Activated CD4-positive, alpha-beta memory T cell treated with anti-CD3 and anti-CD28 coated beads, Interleukin-2, amount 10 ng/mL, durations not matched to agents 7 days and 5 days (primary cell): ENCODE measurements at regions of chr9 and their contacts with region 1.

Region 1: GRCh38 chr9:97982683-97983588 is at the start of gene ANP32B:
- DNase-seq: peak; percentile 95
- H3K4me3 Mint-ChIP-seq: peak within 1 kb of the TSS; percentile 82
- H3K27ac Mint-ChIP-seq: peak within 1 kb of the TSS; percentile 88
- H3K4me1 Mint-ChIP-seq: peaks cover 46% of the 10 kb centered on the region
- H3K27me3 Mint-ChIP-seq: no peaks in the 10 kb centered on the region
- total RNA-seq, gene ANP32B: 317 to 335 TPM

Region 2: DNA sequence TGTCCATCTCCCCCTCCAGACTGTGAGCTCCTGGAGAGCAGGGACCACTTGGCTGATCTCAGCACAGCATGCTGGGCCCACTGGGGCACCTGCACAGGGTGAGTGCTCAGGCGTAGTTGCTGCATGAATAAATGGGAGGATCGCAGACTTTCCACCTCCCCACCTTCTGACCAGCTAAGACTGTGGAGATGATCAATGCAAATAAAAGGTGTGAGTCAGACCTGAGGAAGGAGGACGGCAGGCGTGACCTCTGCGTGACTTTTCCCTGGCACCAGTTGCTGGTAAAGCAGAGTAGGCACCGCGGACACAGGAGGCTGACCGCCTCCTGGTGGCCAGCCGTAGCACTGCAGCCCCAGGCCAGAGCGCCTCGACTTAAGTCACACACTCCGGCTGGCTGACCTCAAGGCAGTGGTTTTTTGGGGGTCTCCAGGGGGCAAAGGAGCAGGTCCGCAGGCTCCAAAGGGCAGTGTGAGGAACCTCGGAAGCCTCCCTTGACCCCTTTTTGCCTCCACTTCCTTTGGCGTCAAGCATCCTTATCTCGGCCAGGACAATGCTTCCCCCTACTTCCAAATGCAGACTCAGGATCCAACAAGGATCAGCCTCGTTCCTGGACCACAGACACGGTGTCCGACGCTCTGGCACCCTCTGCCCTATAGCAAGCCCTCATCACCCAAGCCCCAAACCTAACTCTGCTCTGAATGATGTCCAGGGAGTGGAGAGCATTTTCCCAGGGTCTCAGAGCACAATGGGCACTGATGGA is 583.8 kb before region 1 on chr9:
- CTCF ChIA-PET with region 1: no interaction called
- POLR2A ChIA-PET with region 1: no interaction called
- DNase-seq: peak; percentile 70
- H3K4me3 Mint-ChIP-seq: no peak overlapping the region
- H3K27ac Mint-ChIP-seq: no peak overlapping the region
- H3K4me1 Mint-ChIP-seq: peaks cover 28% of the 10 kb centered on the region
- H3K27me3 Mint-ChIP-seq: peaks cover 56% of the 10 kb centered on the region

Region 3: GRCh38 chr9:97559111-97559514 is 423.8 kb before region 1 on chr9:
- CTCF ChIA-PET with region 1: no interaction called
- POLR2A ChIA-PET with region 1: no interaction called
- DNase-seq: no peak
- H3K4me3 Mint-ChIP-seq: peak overlapping the region; percentile 1
- H3K27ac Mint-ChIP-seq: peak overlapping the region; percentile 41
- H3K4me1 Mint-ChIP-seq: peaks cover 11% of the 10 kb centered on the region
- H3K27me3 Mint-ChIP-seq: peaks cover 31% of the 10 kb centered on the region

Region 4: GRCh38 chr9:97696803-97697601 is 285.9 kb before region 1 on chr9 and contains the start of gene XPA:
- CTCF ChIA-PET with region 1: no interaction called
- POLR2A ChIA-PET with region 1: interaction called, 10 read pairs
- DNase-seq: peak; percentile 96
- H3K4me3 Mint-ChIP-seq: peak within 1 kb of the TSS; percentile 87
- H3K27ac Mint-ChIP-seq: peak within 1 kb of the TSS; percentile 66
- H3K4me1 Mint-ChIP-seq: peaks cover 43% of the 10 kb centered on the region
- H3K27me3 Mint-ChIP-seq: peaks cover 6% of the 10 kb centered on the region
- total RNA-seq, gene XPA: 12.1 to 12.4 TPM

Region 5: GRCh38 chr9:97930972-97931371 is 52.0 kb before region 1 on chr9:
- CTCF ChIA-PET with region 1: interaction called, 10 read pairs
- POLR2A ChIA-PET with region 1: interaction called, 16 read pairs
- DNase-seq: no peak
- H3K4me3 Mint-ChIP-seq: no peak overlapping the region
- H3K27ac Mint-ChIP-seq: peak overlapping the region; percentile 80
- H3K4me1 Mint-ChIP-seq: peaks cover 21% of the 10 kb centered on the region
- H3K27me3 Mint-ChIP-seq: peaks cover 4% of the 10 kb centered on the region

Region 6: GRCh38 chr9:97961361-97961760 is 21.6 kb before region 1 on chr9:
- CTCF ChIA-PET with region 1: interaction called, 3 read pairs
- POLR2A ChIA-PET with region 1: interaction called, 14 read pairs
- DNase-seq: no peak
- H3K4me3 Mint-ChIP-seq: no peak overlapping the region
- H3K27ac Mint-ChIP-seq: no peak overlapping the region
- H3K4me1 Mint-ChIP-seq: peaks cover 15% of the 10 kb centered on the region
- H3K27me3 Mint-ChIP-seq: no peaks in the 10 kb centered on the region

Region 7: GRCh38 chr9:98045234-98046179 is 62.6 kb after region 1 on chr9:
- CTCF ChIA-PET with region 1: interaction called, 5 read pairs
- POLR2A ChIA-PET with region 1: interaction called, 37 read pairs
- DNase-seq: peak; percentile 44
- H3K4me3 Mint-ChIP-seq: peak overlapping the region; percentile 79
- H3K27ac Mint-ChIP-seq: peak overlapping the region; percentile 82
- H3K4me1 Mint-ChIP-seq: peaks cover 49% of the 10 kb centered on the region
- H3K27me3 Mint-ChIP-seq: no peaks in the 10 kb centered on the region

Region 8: GRCh38 chr9:98101868-98102273 is 118.9 kb after region 1 on chr9:
- CTCF ChIA-PET with region 1: interaction called, 3 read pairs
- POLR2A ChIA-PET with region 1: interaction called, 12 read pairs
- DNase-seq: peak; percentile 90
- H3K4me3 Mint-ChIP-seq: peak overlapping the region; percentile 70
- H3K27ac Mint-ChIP-seq: peak overlapping the region; percentile 97
- H3K4me1 Mint-ChIP-seq: peaks cover 87% of the 10 kb centered on the region
- H3K27me3 Mint-ChIP-seq: no peaks in the 10 kb centered on the region